Astrocyte of the cerebellum (primary cell): ENCODE measurements at regions of chr17 and their contacts with region 1.

Region 1: GRCh38 chr17:12591021-12591735 is 74.5 kb upstream of the MYOCD start:
- DNase-seq: no peak
- H3K4me3 ChIP-seq: no peak overlapping the region
- CTCF ChIP-seq: no peak

Region 2: GRCh38 chr17:12431188-12431587 is 160.0 kb before region 1 on chr17:
- in situ Hi-C with region 1: loop called (anchors 10 kb)
- DNase-seq: no peak
- H3K4me3 ChIP-seq: no peak overlapping the region
- CTCF ChIP-seq: no peak

Region 3: GRCh38 chr17:12627177-12627629 is 36.0 kb after region 1 on chr17:
- in situ Hi-C with region 1: no loop called
- DNase-seq: peak; percentile 64
- H3K4me3 ChIP-seq: no peak overlapping the region
- CTCF ChIP-seq: no peak